Right ventricle myocardium superior (tissue), 1 donor: ENCODE measurements at regions of chr11 and their contacts with region 1.

Region 1: DNA sequence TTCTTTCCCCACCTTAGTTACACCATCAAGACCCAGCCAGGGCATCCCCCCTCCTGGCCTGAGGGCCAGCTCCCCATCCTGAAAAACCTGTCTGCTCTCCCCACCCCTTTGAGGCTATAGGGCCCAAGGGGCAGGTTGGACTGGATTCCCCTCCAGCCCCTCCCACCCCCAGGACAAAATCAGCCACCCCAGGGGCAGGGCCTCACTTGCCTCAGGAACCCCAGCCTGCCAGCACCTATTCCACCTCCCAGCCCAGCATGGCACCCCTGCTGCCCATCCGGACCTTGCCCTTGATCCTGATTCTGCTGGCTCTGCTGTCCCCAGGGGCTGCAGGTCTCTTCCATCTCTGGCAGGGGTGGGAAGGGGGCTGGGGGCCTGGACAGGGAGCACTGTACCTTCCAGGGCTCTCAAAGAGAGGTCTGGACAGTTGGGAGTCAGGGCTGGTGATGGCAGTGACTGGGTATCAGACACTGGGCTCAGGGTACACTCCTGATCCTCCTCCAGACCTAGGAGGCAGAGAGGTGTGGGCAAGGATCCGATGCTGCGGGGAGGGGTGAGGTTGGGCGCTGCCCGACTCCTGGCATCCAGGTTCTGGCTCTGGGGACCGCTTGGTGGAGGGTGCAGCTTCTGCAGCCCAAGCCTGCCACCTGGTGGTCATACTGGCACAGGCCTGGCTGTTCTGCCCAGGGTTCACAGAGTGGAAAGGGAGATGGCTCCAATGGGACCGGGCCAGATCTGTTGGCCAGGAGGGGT is at the start of gene UPK2:
- DNase-seq: peak; percentile 92
- ATAC-seq: peak; percentile 98
- total RNA-seq, gene UPK2: not detected

Region 2: DNA sequence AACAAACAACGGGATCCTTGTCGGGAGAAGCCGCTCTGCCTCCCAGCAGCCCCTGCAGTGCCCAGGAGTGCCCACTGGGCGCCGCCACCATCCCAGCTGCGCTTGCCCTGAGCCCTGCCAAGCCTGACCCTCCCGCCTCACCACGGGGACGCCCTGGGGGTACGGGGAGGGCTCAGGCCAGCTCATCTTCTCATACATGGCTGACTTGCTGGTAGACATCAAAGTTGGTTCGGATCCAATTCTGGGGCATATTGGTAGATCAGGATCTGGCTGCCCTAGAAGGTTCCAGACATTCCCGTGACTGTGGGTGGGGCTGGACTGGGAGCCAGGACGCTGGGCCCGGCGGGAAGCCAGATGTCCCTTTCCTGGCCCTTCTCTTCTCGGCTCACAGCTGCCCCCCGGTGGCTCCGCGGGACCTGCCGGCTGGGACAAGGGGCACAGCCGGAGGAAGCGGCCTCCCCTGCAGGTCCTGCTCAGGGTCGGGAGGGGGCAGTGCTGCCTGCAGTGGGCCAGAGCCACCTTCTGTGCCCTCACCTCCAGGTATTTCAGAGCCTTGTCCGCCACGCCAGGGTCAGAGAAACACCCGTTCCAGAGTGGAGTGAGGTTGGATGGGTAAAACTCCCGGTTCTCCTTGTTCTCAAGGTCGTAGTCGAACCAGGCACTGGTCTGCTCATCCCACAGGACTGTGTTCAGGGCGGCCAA is 266.3 kb before region 1 on chr11:
- intact Hi-C with region 1: loop called (anchors 5 kb)
- DNase-seq: peak; percentile 98
- ATAC-seq: peak; percentile 97

Region 3: GRCh38 chr11:118907051-118908042 is 48.9 kb before region 1 on chr11:
- intact Hi-C with region 1: loop called (anchors 2 kb)
- DNase-seq: peak; percentile 88
- ATAC-seq: peak; percentile 55

Region 4: DNA sequence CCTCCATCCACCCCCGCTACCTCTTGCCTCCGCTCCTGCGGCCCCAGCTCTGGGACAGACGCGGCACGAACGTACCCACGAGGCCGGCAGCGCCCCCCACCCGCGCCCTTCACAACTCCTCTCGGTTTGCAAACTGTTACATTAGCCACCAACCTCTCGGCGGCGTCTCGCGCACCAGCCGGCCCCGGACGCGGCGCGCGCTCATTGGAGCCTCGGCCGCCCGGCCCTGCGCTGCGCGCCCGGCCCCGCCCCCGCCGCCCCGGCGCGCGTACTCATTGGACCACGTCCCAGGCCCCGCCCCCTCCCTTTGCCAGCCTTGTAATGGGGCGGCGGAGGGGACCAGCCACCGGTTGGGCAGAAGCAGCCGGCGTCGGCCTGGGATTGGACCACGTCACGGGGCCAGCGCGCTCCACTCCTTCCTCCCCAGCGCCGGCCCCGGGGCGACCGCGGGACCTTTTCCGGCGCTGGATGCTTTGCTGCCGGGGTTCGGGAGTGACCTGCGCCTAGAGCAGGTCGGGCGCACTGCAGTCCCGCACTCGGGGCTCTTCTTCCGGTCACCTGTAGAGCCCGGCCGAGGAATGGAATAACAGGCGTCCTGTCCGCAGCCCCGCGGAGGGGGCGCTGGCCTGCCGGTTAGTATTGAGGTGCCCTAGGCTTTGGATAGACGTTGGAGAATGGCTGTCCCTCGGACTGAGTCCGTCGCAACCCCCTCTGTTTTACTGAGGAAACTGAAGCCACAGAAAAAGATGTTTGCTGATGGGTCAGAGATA is 100.9 kb after region 1 on chr11 and contains the start of gene HYOU1:
- intact Hi-C with region 1: no loop called
- DNase-seq: peak; percentile 99
- ATAC-seq: peak; percentile 97
- total RNA-seq, gene HYOU1: 63.5 TPM